Activated T-helper 1 cell treated with anti-CD3 and anti-CD28 coated beads, Interleukin-12 subunit alpha, Interleukin-12 subunit beta, Interleukin-2, Interleukin-4 antibody, amounts not matched to agents 30 ng/mL and 10 ng/mL and 1 ng/mL, durations not matched to agents 14 hours and 24 hours and 36 hours (primary cell): ENCODE measurements at regions of chr2 and their contacts with region 1.

Region 1: GRCh38 chr2:178450774-178451525 is at the starts of genes PJVK and PRKRA:
- DNase-seq: peak; percentile 97
- H3K4me3 Mint-ChIP-seq: peak within 1 kb of the TSS; percentile 91
- H3K27ac Mint-ChIP-seq: peak within 1 kb of the TSS; percentile 95
- H3K4me1 Mint-ChIP-seq: peaks cover 35% of the 10 kb centered on the region
- H3K27me3 Mint-ChIP-seq: peaks cover 3% of the 10 kb centered on the region
- total RNA-seq, gene PJVK: 1.1 and 2.5 TPM in 2 replicates
- total RNA-seq, gene PRKRA: 45.1 and 50.5 TPM in 2 replicates

Region 2: DNA sequence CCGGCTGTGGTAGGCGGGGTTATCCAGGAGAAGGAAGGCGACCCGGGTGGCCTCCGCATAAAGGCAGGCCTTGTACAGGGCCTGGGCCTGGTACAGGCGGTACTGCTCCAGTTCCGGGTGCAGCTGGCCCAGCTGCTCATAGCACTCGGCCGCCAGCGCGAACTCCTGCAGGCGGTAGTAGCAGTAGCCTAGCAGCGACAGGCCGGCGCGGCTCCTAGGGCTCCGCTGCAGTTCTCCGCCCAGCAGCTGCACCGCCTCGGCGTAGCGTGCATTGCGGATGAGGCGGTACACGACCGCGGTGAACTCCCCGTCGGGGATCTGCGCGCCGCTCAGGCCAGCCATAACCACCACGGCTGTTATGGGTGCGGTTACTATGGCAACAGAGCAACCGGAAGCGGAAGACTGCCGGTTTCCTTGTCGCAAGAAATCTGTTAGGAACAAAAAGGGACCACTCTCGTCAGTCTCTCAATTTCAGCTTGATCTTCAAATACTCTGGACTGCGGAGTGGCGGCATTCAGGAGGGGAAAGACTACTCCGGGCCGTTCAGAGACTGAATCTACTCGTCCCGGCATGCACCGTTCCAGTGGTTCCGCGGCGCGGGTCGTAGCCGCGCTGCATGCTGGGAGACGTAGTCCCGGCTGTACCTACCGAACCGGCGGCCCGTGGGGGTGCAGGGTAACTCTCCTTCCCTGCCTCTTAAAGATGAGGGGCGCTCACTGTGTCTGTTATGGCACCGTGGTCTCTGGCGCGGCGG is 898.4 kb before region 1 on chr2:
- intact Hi-C with region 1: loop called (anchors 2 kb)
- DNase-seq: peak; percentile 88
- H3K4me3 Mint-ChIP-seq: peak overlapping the region; percentile 95
- H3K27ac Mint-ChIP-seq: peak overlapping the region; percentile 100
- H3K4me1 Mint-ChIP-seq: peaks cover 16% of the 10 kb centered on the region
- H3K27me3 Mint-ChIP-seq: no peaks in the 10 kb centered on the region

Region 3: DNA sequence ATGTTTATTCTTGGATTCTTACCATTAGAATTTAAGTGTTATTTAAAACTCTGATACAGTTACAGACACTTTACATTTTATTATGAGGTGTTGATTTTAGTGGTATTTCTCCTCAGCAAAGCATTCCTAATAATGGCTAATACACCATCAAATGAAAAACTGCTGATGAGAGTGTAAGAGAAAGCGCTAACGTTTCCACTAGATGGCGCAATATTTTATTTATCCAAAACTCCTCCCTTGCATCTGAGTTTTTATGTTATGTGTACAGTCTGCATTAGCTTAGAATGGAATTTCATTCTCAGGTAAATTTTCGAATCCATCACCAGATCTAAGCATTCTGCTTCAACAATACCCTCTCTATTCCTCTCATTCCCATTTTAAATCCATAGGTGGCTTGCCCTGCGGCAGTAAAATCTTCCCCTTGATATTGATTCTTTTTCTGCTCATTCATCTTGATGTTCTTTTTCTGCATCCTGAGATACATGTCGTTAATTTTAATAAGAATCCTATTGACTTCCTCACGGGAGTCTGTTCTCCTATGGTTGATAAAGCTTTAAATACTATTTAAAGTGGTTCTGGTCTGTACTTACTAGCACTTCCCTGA is 53.8 kb before region 1 on chr2:
- intact Hi-C with region 1: loop called (anchors 2 kb)
- DNase-seq: no peak
- H3K4me3 Mint-ChIP-seq: no peak overlapping the region
- H3K27ac Mint-ChIP-seq: no peak overlapping the region
- H3K4me1 Mint-ChIP-seq: peaks cover 19% of the 10 kb centered on the region
- H3K27me3 Mint-ChIP-seq: peaks cover 6% of the 10 kb centered on the region

Region 4: GRCh38 chr2:178478439-178479274 is 27.7 kb after region 1 on chr2 and contains the start of gene FKBP7:
- intact Hi-C with region 1: loop called (anchors 1 kb)
- DNase-seq: peak; percentile 75
- H3K4me3 Mint-ChIP-seq: peak within 1 kb of the TSS; percentile 95
- H3K27ac Mint-ChIP-seq: peak within 1 kb of the TSS; percentile 99
- H3K4me1 Mint-ChIP-seq: peaks cover 39% of the 10 kb centered on the region
- H3K27me3 Mint-ChIP-seq: no peaks in the 10 kb centered on the region
- total RNA-seq, gene FKBP7: 2.9 and 4.5 TPM in 2 replicates

Region 5: DNA sequence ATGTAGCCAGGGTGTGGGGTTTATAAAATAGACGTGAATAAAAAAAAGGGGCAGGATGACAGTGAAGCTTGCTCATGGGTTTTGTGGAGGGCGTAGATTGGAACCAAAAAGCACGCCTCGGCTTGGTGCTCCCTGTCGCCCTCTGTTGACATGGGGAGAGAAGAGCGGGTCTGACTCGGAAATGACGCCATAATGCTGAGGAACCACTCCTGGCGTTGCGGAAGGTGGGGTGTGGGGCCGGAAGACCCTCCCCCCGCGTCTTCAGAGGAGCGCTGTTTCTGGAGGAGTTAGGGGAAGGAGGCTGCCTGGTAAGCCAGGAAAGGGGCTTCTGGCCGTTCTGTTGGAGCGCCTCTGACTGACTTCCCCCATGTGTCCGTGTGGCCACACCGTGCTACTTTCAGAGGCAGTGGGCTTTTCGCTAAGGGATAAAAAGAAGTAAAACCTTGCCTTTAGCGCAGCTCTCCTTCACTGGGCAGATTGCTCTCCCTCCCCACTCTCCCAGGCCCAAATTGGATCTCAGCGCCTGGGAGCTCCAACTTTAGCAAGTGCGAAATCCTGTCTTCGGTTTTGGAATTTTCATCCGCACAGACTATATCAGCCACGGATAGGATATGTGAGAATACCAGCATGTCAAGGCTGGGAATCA is 72.1 kb after region 1 on chr2:
- intact Hi-C with region 1: loop called (anchors 1 kb)
- DNase-seq: peak; percentile 80
- H3K4me3 Mint-ChIP-seq: peak overlapping the region; percentile 99
- H3K27ac Mint-ChIP-seq: peak overlapping the region; percentile 92
- H3K4me1 Mint-ChIP-seq: peaks cover 42% of the 10 kb centered on the region
- H3K27me3 Mint-ChIP-seq: no peaks in the 10 kb centered on the region

Region 6: DNA sequence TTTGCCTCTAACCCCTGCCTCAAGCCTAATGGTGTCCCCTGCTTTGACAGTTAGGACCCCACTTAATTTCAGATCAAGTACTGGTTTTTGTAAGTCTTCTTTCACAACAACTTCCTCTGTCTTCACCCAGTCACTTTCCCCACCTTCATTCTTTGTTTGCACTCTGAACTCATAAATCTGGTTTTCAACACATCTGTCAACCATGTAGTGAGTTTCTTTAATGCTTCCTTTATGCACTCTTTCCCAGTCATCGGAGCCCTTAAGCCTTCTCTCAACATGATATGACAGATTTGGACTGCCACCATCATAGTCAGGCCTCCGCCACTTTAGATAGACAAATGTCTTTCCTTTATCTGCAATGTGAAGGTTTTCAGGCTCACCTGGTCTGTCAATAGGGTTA is 138.4 kb after region 1 on chr2:
- intact Hi-C with region 1: no loop called
- DNase-seq: no peak
- H3K4me3 Mint-ChIP-seq: no peak overlapping the region
- H3K27ac Mint-ChIP-seq: no peak overlapping the region
- H3K4me1 Mint-ChIP-seq: no peaks in the 10 kb centered on the region
- H3K27me3 Mint-ChIP-seq: no peaks in the 10 kb centered on the region